ENCODE measurements at regions of chr4 and their contacts with region 1.

Region 1: DNA sequence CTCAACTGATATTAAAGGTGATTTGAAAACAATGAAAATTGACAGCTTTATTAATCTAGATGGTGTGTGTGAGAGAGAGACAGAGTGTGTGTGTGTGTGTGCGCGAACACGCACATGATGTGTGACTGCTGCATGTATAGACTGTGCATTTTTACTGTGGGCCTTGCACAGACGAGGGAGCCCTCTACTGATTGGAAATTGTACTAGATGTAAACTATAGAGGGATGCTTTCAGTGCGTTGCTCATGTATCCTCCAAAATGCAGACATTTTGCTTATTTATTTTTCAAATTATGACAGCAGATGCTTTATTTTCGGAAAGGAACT is 168.4 kb upstream of the GK2 start:
- DNase-seq: peak in 3 of 4 experiments; percentile 11 to 61 (median 27)
- ATAC-seq: peak; percentile 94
- H3K4me3 ChIP-seq: no peak overlapping the region
- H3K27ac ChIP-seq: no peak overlapping the region
- H3K4me1 ChIP-seq: no peaks in the 10 kb centered on the region; a peak in 2 of 5 replicates
- H3K27me3 ChIP-seq: no peaks in the 10 kb centered on the region
- CTCF ChIP-seq: peak; percentile 50 to 72 (median 62); a peak in 5 of 6 replicates
- EP300 ChIP-seq: no peak
- POLR2A ChIP-seq: no peak
- RAD21 ChIP-seq: peak; percentile 75 to 84

Region 2: DNA sequence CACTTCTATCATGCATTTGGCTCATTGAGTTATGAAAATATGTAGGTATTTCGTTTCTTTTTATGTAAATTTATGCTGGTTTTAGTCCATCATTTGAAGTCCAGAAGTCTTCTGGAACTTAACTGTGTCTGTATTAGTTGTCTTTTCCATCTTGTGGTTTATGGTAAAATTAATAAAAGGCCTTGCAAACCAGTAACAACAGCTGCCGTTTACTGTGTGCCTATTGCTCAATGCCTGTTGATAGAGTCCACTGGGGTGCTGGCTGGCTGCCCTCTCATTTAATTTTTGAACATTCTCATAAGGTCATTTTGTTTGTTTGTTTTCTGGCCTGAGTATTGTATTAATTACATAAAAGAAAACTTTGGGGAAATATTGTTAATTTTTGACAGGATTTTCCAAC is 348.5 kb before region 1 on chr4:
- CTCF ChIA-PET with region 1: no interaction called
- POLR2A ChIA-PET with region 1: no interaction called
- in situ Hi-C with region 1: no loop called
- intact Hi-C with region 1: no loop called
- DNase-seq: no peak
- ATAC-seq: no peak
- H3K4me3 ChIP-seq: no peak overlapping the region
- H3K27ac ChIP-seq: no peak overlapping the region
- H3K4me1 ChIP-seq: peaks cover 3 to 24% of the 10 kb centered on the region in 2 experiments; a peak in 3 of 5 replicates
- H3K27me3 ChIP-seq: no peaks in the 10 kb centered on the region
- CTCF ChIP-seq: no peak
- EP300 ChIP-seq: no peak
- POLR2A ChIP-seq: no peak
- RAD21 ChIP-seq: no peak

Region 3: DNA sequence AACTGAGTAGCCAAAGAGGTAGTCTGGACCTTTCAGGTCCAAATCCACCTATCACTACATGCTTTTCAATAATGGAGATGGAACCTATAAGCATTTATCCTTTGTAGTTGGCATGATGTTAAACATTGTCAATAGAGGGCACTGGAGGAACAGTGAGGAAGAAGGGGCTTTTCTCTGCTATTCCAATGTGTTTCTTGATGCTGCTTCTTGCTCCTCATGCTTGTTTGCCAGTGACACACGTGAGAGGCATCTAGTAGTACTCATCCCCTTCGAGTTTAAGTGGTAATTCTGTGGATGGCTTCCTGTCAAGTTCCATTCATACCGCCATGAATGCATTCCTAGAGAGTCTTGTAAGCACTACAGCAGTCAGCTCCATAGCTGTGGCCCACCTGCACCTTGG is 334.5 kb before region 1 on chr4:
- CTCF ChIA-PET with region 1: no interaction called
- POLR2A ChIA-PET with region 1: no interaction called
- in situ Hi-C with region 1: no loop called
- intact Hi-C with region 1: loop called (anchors 5 kb)
- DNase-seq: no peak
- ATAC-seq: no peak
- H3K4me3 ChIP-seq: no peak overlapping the region
- H3K27ac ChIP-seq: no peak overlapping the region
- H3K4me1 ChIP-seq: no peaks in the 10 kb centered on the region
- H3K27me3 ChIP-seq: no peaks in the 10 kb centered on the region
- CTCF ChIP-seq: peak in 2 of 3 experiments; percentile 7 to 11; a peak in 1 of 6 replicates
- EP300 ChIP-seq: no peak
- POLR2A ChIP-seq: no peak
- RAD21 ChIP-seq: peak in 1 of 2 experiments; percentile 35; a peak in 2 of 4 replicates